Activated naive CD4-positive, alpha-beta T cell treated with anti-CD3 and anti-CD28 coated beads, Interleukin-2, amount 10 ng/mL, durations not matched to agents 7 days and 5 days (primary cell): ENCODE measurements at regions of chr1 and their contacts with region 1.

Region 1: DNA sequence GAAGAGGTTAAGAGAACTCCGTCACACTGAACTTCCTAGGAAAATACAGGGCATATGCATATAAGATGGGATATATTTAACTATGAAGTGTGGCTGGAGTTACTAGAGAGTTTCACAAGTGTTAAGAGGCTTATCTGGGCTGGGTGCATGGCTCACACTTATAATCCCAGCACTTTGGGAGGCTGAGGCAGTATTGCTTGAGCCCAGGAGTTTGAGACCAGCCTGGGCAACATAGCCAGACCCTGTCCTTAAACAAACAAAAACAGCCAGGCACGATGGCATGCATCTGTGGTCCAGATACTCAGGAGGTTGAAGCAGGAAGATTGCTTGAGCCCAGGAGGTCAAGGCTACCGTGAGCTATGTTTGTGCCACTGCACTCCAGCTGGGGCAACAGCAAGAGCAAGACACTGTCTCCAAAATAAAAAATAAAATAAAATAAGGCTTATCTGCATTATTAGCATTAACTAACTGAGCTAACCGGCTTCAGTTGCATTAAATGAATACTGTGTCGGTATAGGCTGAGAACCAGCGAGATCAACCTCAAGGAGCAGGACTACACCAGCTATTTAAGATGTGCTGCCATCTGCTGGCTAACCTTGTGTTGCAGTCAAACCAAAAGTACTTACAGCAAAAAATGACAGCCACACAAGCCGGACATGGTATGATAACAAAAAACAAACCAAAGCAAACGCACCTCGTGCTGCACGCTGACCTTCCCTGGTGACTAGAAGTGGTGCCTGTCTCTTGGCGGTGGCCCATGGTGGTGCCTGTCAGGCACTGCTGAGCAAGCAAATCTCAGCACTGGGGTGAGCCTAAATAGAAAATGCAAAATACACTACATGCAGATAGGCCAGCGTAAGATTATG is 19.7 kb upstream of the RBBP5 start:
- DNase-seq: peak; percentile 86
- H3K4me3 Mint-ChIP-seq: no peak overlapping the region
- H3K27ac Mint-ChIP-seq: no peak overlapping the region
- H3K4me1 Mint-ChIP-seq: peaks cover 6% of the 10 kb centered on the region
- H3K27me3 Mint-ChIP-seq: no peaks in the 10 kb centered on the region

Region 2: DNA sequence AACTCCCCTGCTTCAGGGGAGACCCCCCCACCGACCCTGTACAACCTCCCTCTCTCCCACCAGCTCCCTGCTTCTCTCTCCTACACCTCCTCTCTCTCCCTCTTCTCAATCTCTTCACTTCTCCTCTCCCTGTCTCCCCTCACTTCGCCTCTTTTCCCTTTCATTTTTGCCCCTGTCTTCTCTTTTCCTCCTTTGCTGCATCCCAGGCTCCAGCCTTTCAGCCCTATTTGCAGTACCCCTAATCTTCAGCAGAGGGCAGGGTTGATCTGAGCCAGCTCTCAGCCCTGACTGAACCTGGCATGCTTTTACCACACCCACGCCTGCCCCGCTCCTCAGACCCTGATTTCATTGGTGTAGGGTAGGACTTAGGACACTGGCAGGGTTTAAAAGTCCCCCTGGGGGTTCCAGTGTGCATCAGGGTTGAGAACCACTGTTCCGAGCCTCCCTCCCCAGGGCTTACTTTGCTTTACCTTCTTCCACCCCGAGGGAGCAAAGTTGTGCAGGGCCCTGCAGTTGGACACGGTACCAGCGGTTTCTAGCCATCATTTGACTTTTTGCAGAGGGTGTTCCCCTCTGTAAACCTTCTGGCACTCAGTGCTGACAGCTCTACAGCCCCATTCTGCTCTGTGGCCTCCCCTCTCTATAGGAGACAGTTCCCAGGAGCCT is 165.8 kb before region 1 on chr1:
- CTCF ChIA-PET with region 1: interaction called, 12 read pairs
- DNase-seq: peak; percentile 64
- H3K4me3 Mint-ChIP-seq: no peak overlapping the region
- H3K27ac Mint-ChIP-seq: no peak overlapping the region
- H3K4me1 Mint-ChIP-seq: no peaks in the 10 kb centered on the region
- H3K27me3 Mint-ChIP-seq: peaks cover 62% of the 10 kb centered on the region

Region 3: GRCh38 chr1:205020466-205020865 is 121.0 kb before region 1 on chr1:
- CTCF ChIA-PET with region 1: no interaction called
- DNase-seq: no peak
- H3K4me3 Mint-ChIP-seq: no peak overlapping the region
- H3K27ac Mint-ChIP-seq: no peak overlapping the region
- H3K4me1 Mint-ChIP-seq: no peaks in the 10 kb centered on the region
- H3K27me3 Mint-ChIP-seq: peaks cover 18% of the 10 kb centered on the region

Region 4: DNA sequence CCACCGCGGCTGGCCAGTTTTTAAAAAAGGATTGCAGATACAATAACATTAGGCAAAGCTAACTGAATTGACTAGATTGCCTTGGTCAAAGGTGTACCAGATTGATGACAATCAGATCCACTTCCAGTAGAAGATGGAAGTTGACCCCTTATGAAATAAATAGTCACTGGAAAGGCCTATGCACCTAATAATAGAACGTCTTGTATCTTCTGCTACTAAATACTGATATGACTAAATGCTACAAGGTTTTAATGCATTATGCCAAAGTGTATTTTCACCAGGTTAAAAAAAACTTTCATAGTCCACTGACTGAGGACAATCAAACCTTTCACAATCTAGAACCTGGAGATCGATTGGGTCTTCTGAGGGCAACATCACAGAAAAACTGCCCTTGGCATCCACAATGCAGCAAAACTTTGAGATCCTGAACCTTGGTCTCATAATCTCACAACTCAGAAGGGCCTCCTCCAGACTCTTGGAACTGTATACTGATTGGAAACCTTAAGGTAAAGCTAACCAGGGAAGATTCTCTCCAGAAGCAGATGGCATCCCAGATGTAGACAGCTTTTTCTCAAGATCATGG is 11.9 kb before region 1 on chr1:
- CTCF ChIA-PET with region 1: interaction called, 11 read pairs
- DNase-seq: no peak
- H3K4me3 Mint-ChIP-seq: no peak overlapping the region
- H3K27ac Mint-ChIP-seq: no peak overlapping the region
- H3K4me1 Mint-ChIP-seq: no peaks in the 10 kb centered on the region
- H3K27me3 Mint-ChIP-seq: no peaks in the 10 kb centered on the region

Region 5: DNA sequence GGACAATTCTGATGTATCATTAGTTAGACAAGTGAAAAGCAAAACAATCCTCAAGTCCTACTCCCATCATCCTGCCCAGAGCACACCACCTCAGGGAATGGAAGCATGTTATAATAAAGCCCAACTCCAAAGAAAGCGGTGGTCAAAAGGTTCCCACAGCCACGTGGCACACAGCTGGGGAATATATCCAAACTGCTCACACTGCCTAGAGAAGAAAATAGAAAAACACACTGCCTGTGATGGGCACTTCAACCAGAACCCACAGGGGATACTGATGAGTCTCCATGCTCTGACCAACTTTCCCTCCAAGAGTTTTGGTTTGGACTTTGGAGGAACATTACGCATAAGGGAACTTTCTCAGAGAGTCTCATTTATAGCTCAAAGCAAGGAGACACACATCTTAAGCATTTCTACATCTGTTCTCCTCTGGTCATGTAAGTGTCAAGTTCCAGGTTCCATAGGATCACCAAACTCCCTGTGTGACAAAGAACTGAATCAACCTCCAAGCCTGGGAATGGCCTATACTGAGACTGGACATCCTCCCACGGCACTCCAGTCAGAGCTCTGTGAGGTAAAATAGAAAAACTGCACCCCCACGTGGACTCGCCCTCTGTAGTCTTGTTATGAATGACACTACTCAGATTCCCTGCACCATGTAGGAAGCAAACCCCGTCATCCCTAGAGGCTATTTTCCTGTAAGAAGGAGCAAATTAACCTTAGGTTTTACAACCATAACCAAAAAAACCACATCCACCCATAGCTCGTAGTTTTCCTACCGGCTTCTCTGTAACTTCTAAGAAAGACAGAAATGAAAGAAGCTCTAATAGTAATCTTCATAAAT is 57.8 kb after region 1 on chr1:
- CTCF ChIA-PET with region 1: interaction called, 12 read pairs
- DNase-seq: peak; percentile 31
- H3K4me3 Mint-ChIP-seq: peak overlapping the region; percentile 1
- H3K27ac Mint-ChIP-seq: no peak overlapping the region
- H3K4me1 Mint-ChIP-seq: peaks cover 41% of the 10 kb centered on the region
- H3K27me3 Mint-ChIP-seq: no peaks in the 10 kb centered on the region

Region 6: DNA sequence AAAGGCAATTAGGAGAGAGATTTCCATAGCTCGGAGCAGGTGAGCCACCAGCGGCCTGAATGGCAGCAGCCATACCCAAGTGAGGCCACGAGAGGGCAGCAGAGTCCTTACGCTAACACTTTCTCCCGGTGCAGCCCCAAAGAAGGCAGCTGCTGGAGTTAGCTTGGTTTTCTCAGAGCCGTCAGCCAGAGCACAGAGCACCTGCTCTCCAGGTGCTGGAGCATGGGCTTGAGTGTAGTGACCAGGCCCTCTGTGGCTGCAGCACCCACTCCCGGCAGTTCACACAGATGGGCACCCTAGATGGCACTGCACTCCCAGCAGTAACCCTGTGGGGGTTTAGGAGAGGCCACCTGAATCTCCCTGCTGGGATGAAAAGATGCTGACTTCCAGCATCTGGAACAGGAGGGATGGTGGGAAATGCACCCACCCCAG is 132.1 kb after region 1 on chr1:
- CTCF ChIA-PET with region 1: no interaction called
- DNase-seq: peak; percentile 92
- H3K4me3 Mint-ChIP-seq: no peak overlapping the region
- H3K27ac Mint-ChIP-seq: peak overlapping the region; percentile 82
- H3K4me1 Mint-ChIP-seq: peaks cover 38% of the 10 kb centered on the region
- H3K27me3 Mint-ChIP-seq: peaks cover 26% of the 10 kb centered on the region

Region 7: GRCh38 chr1:205300886-205301821 is 159.7 kb after region 1 on chr1:
- CTCF ChIA-PET with region 1: no interaction called
- DNase-seq: no peak
- H3K4me3 Mint-ChIP-seq: no peak overlapping the region
- H3K27ac Mint-ChIP-seq: no peak overlapping the region
- H3K4me1 Mint-ChIP-seq: peaks cover 32% of the 10 kb centered on the region
- H3K27me3 Mint-ChIP-seq: peaks cover 14% of the 10 kb centered on the region